Dorsolateral prefrontal cortex (tissue), 120 donors: ENCODE measurements at regions of chr20 and their contacts with region 1.

Region 1: DNA sequence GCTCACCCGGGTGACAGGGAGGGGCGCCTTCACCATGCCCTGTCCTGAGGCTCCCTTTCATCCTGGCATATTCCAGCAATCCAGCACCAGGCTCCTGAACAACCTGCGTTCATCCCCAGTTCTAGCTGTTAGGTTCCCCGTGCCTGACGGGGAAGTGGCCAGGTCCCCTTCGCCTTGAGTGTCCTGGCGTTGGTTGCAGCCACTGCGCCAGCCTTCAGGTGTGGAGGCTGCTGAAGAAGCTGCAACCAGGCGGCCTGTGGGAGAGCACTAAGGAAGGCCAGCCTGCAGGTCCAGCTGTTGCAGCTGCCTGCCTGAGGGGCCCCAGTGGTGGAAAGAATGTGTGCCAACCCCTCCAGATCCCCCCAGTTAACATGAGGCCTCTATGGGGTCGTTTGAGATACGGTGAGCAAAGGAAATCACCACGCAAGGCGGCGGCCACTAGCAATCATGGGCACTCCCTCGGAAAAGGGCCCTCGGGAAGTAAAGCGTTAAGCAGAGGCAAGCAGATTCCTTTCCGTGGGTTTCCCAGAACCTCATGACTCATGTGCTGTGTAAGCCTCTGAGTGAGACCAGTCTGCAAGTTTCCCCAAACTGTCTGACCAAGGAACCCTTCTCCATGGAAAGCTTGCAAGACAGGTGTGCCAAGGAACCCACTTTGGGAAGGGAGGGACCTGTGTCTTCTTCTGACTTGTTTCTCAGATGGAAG is 320.8 kb downstream of the TAF4 start:
- DNase-seq: no peak
- H3K4me3 ChIP-seq: no peak overlapping the region
- H3K27ac ChIP-seq: peak overlapping the region in 2 of 59 donors; percentile 43 to 51
- H3K27me3 ChIP-seq: no peaks in the 10 kb centered on the region
- CTCF ChIP-seq: no peak

Region 2: GRCh38 chr20:61868466-61869090 is 123.7 kb after region 1 on chr20:
- intact Hi-C with region 1: loop called in 1 of 2 experiments (anchors 5 kb)
- DNase-seq: no peak
- H3K4me3 ChIP-seq: no peak overlapping the region
- H3K27ac ChIP-seq: no peak overlapping the region
- H3K27me3 ChIP-seq: no peaks in the 10 kb centered on the region
- CTCF ChIP-seq: no peak